ENCODE measurements at regions of chr12 and their contacts with region 1.

Region 1: DNA sequence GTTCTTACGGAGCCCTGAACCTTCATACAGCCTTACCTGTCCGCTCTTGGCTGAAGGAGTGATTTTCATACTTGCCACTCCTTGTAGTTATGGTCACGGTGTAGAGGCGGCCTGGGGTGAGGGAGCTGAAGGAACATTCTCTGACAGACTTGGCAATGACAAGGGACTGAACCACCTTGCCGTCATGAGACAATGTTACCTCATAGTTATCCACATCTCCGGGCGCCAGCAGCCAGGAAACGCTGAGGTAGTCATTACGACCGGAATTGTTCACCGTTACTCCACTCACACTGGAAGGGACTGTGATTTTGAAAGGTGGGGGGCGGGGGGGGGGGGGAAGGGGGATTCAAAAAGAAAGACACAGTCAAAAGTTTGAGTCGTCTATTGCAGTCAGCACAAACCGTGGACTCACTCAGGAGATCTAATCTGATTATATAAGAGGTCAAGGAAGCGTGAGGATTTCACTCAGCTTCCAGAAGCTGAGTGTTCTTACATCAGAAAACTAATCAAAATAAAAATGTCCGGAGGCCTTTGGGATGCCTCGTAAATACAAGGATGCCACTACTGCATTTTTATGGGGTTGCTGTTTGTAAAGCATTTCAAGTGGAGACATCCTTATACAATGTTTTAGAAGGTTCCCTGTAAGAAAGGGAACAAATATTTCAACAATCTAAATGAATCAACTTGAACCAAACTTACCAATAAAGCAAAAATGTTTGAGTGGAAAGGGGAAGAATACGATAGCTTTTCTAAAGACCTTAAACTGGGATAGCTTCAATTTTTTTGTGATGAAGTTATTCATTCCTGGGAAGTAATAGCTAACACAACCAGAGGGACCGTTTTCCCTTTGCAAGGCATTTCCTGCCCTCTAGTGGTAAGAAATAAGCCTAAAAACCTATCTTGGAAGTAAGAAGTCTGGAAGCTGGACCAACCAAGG is 60.6 kb downstream of the PTPRB start:
- DNase-seq: peak in 2 of 9 experiments; percentile 48 to 61
- ATAC-seq: no peak
- H3K4me3 ChIP-seq: no peak overlapping the region
- H3K4me3 Mint-ChIP-seq: no peak overlapping the region
- H3K27ac ChIP-seq: no peak overlapping the region
- H3K27ac Mint-ChIP-seq: no peak overlapping the region
- H3K4me1 ChIP-seq: no peaks in the 10 kb centered on the region
- H3K4me1 Mint-ChIP-seq: no peaks in the 10 kb centered on the region
- H3K27me3 ChIP-seq: no peaks in the 10 kb centered on the region
- H3K27me3 Mint-ChIP-seq: peaks cover 6% of the 10 kb centered on the region
- CTCF ChIP-seq: peak; percentile 70

Region 2: GRCh38 chr12:70214972-70215617 is 361.5 kb before region 1 on chr12:
- CTCF ChIA-PET with region 1: no interaction called
- POLR2A ChIA-PET with region 1: no interaction called
- intact Hi-C with region 1: loop called in 1 of 2 experiments (anchors 5 kb)
- DNase-seq: no peak
- ATAC-seq: no peak
- H3K4me3 ChIP-seq: no peak overlapping the region
- H3K4me3 Mint-ChIP-seq: no peak overlapping the region
- H3K27ac ChIP-seq: no peak overlapping the region
- H3K27ac Mint-ChIP-seq: no peak overlapping the region
- H3K4me1 ChIP-seq: no peaks in the 10 kb centered on the region
- H3K4me1 Mint-ChIP-seq: no peaks in the 10 kb centered on the region
- H3K27me3 ChIP-seq: no peaks in the 10 kb centered on the region
- H3K27me3 Mint-ChIP-seq: no peaks in the 10 kb centered on the region
- CTCF ChIP-seq: no peak

Region 3: GRCh38 chr12:70628701-70629480 is 52.3 kb after region 1 on chr12:
- CTCF ChIA-PET with region 1: no interaction called
- POLR2A ChIA-PET with region 1: no interaction called
- intact Hi-C with region 1: no loop called
- DNase-seq: no peak
- ATAC-seq: no peak
- H3K4me3 ChIP-seq: no peak overlapping the region
- H3K4me3 Mint-ChIP-seq: no peak overlapping the region
- H3K27ac ChIP-seq: no peak overlapping the region
- H3K27ac Mint-ChIP-seq: no peak overlapping the region
- H3K4me1 ChIP-seq: no peaks in the 10 kb centered on the region
- H3K4me1 Mint-ChIP-seq: no peaks in the 10 kb centered on the region
- H3K27me3 ChIP-seq: no peaks in the 10 kb centered on the region
- H3K27me3 Mint-ChIP-seq: peaks cover 3% of the 10 kb centered on the region
- CTCF ChIP-seq: no peak

Region 4: DNA sequence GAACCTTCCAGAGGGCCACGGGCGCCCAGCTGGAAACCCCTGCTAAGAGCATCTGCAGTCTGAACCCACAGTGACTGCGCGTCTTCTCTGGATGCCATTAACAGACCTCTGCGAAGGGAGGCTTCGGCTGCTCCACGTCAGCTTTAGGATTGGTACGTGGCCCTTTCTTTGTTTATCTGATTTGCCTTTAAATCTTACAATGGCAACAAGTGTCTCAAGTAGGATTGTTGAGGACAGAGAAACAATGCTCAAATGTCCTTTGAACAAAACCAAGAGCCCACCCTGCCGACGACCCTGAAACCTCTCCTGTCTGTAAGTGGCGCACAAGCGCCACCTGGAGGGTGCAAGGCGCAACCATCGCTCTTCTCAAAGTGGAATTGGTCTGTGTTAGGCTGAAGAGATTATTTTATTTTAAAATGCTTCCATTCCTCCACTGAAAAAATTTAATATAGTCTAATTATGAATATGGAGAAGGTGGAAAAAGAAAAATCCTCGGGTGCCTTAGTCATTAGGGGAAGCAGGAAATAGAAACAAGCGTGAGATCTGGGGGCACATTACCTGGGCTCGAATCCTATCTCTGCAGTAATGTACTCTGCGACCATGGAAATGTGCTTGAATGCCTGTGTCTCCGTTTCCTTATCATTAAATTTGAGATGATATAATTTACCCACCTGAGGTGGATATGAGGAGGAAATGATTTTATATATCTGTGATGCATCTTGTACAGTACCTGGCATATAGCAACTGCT is 143.2 kb after region 1 on chr12:
- CTCF ChIA-PET with region 1: no interaction called
- POLR2A ChIA-PET with region 1: no interaction called
- intact Hi-C with region 1: loop called (anchors 10 kb)
- DNase-seq: peak in 7 of 9 experiments; percentile 2 to 53 (median 29)
- ATAC-seq: peak; percentile 48
- H3K4me3 ChIP-seq: no peak overlapping the region
- H3K4me3 Mint-ChIP-seq: peak overlapping the region; percentile 51
- H3K27ac ChIP-seq: no peak overlapping the region
- H3K27ac Mint-ChIP-seq: no peak overlapping the region
- H3K4me1 ChIP-seq: peaks cover 4% of the 10 kb centered on the region
- H3K4me1 Mint-ChIP-seq: peaks cover 9% of the 10 kb centered on the region
- H3K27me3 ChIP-seq: no peaks in the 10 kb centered on the region
- H3K27me3 Mint-ChIP-seq: peaks cover 12% of the 10 kb centered on the region
- CTCF ChIP-seq: peak; percentile 74